ENCODE measurements at regions of chr7 and their contacts with region 1.

Region 1: DNA sequence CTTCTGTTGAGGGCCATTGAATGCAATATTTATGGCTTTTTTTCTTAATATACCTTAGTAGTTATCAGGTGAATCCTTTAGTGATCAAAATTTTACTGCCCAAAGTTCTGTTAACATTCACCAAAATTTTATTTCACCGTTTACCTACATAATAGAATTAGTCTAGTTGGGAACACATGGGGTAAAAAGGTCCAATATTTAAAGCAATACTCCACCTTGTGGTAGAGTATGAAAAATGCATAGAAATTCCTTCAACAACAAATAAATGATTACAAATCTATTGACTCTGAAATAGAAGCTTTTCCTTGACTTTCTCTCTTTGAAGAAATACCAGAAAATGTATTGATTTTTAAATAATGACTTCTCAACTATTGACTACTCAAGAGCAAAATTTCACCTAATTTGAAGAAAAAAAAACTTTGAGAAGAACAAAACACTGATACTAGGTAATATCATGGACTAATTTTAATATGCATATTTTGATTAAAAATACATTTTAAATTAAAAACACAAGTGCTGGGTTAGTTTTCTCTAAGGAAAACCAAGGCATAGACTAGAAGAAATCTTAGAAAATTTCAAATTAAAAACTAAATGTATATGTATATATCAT is 43.3 kb downstream of the POLR1F start:
- DNase-seq: peak; percentile 12
- ATAC-seq: no peak
- H3K4me3 ChIP-seq: no peak overlapping the region
- H3K27ac ChIP-seq: no peak overlapping the region
- H3K4me1 ChIP-seq: no peaks in the 10 kb centered on the region
- H3K27me3 ChIP-seq: no peaks in the 10 kb centered on the region
- CTCF ChIP-seq: peak; percentile 33 to 69 (median 42); a peak in 4 of 6 replicates
- POLR2A ChIP-seq: no peak
- RAD21 ChIP-seq: peak; percentile 69

Region 2: GRCh38 chr7:18815261-18815960 is 850.1 kb before region 1 on chr7:
- CTCF ChIA-PET with region 1: no interaction called
- POLR2A ChIA-PET with region 1: no interaction called
- RAD21 ChIA-PET with region 1: no interaction called
- intact Hi-C with region 1: no loop called
- DNase-seq: no peak
- ATAC-seq: no peak
- H3K4me3 ChIP-seq: no peak overlapping the region
- H3K27ac ChIP-seq: no peak overlapping the region
- H3K4me1 ChIP-seq: no peaks in the 10 kb centered on the region
- H3K27me3 ChIP-seq: no peaks in the 10 kb centered on the region
- CTCF ChIP-seq: no peak
- POLR2A ChIP-seq: no peak
- RAD21 ChIP-seq: no peak

Region 3: GRCh38 chr7:19442016-19442785 is 223.3 kb before region 1 on chr7:
- CTCF ChIA-PET with region 1: no interaction called
- POLR2A ChIA-PET with region 1: no interaction called
- RAD21 ChIA-PET with region 1: no interaction called
- intact Hi-C with region 1: loop called (anchors 10 kb)
- DNase-seq: peak; percentile 50
- ATAC-seq: peak; percentile 99
- H3K4me3 ChIP-seq: no peak overlapping the region
- H3K27ac ChIP-seq: no peak overlapping the region
- H3K4me1 ChIP-seq: no peaks in the 10 kb centered on the region
- H3K27me3 ChIP-seq: no peaks in the 10 kb centered on the region
- CTCF ChIP-seq: peak; percentile 52 to 63 (median 58); a peak in 5 of 6 replicates
- POLR2A ChIP-seq: no peak
- RAD21 ChIP-seq: peak; percentile 79

Region 4: GRCh38 chr7:19728716-19729115 is 63.2 kb after region 1 on chr7:
- CTCF ChIA-PET with region 1: no interaction called
- POLR2A ChIA-PET with region 1: no interaction called
- RAD21 ChIA-PET with region 1: no interaction called
- intact Hi-C with region 1: no loop called
- DNase-seq: no peak
- ATAC-seq: no peak
- H3K4me3 ChIP-seq: no peak overlapping the region
- H3K27ac ChIP-seq: no peak overlapping the region
- H3K4me1 ChIP-seq: no peaks in the 10 kb centered on the region
- H3K27me3 ChIP-seq: no peaks in the 10 kb centered on the region
- CTCF ChIP-seq: no peak
- POLR2A ChIP-seq: no peak
- RAD21 ChIP-seq: no peak

Region 5: GRCh38 chr7:20053334-20054104 is 388.0 kb after region 1 on chr7:
- CTCF ChIA-PET with region 1: no interaction called
- POLR2A ChIA-PET with region 1: no interaction called
- RAD21 ChIA-PET with region 1: no interaction called
- intact Hi-C with region 1: no loop called
- DNase-seq: no peak
- ATAC-seq: no peak
- H3K4me3 ChIP-seq: no peak overlapping the region
- H3K27ac ChIP-seq: no peak overlapping the region
- H3K4me1 ChIP-seq: no peaks in the 10 kb centered on the region
- H3K27me3 ChIP-seq: no peaks in the 10 kb centered on the region
- CTCF ChIP-seq: no peak
- POLR2A ChIP-seq: no peak
- RAD21 ChIP-seq: no peak